AG04449 (cell line): ENCODE measurements at regions of chr3 and their contacts with region 1.

Region 1: DNA sequence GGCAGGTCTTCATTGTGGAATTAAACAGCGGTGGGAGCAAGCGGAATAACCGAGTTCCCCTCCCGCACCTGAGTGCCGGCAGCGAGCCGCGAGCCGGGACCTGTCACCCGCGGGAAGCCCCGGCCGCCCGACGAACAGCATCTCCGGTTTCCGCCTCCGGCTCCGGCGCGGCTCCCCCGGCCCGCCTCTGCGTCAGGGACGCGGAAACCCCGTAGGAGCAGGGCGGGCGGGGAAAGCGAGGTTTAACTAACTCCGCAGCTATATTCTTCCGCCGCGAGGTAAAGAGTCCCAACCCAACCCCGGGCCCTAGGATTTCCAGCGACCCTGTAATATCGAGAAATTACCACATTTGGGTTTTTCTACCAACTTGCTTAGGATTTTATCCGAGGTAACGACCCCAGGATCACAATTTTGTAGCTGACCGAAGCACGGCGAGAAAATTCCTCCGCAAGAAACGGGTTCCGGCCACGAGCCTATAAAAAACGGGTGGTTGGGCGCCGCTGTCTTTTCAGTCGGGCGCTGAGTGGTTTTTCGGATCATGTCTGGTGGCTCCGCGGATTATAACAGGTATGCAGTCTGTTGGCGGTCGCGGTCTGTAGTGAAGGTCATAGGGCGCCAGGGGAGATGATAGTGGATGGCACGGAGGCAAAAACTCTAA is at the start of gene EIF4A2:
- DNase-seq: peak; percentile 52
- H3K4me3 ChIP-seq: peak within 1 kb of the TSS; percentile 98
- CTCF ChIP-seq: no peak

Region 2: DNA sequence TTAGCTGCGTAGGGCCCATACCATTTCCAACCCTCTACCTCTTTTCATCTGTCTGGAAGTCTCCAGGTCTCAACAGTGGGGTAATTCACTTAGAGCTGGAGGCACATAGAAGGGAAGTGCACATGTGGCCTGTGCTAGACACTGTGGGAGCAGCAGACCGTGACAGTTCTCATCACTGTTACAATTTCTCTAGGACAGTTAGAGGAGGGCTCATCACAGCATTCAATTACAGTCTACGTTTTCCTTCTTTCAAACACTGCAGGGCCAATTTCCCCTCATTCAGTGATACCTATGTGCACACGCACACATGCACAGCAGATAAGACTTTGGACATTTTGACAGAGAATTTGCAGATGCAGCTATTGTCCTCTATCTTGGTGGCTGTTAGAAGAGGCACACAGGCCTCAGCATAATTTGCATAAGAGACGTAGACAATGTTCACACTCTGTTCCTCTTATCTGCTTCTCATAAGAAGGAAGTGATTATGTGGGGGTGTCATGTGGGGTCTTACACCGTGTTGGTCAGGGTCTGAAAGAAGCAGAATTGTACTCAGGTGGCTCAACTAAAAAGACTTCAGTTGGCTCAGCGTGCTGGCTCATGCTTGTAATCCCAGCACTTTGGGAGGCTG is 130.0 kb before region 1 on chr3:
- CTCF ChIA-PET with region 1: no interaction called
- POLR2A ChIA-PET with region 1: no interaction called
- DNase-seq: no peak
- H3K4me3 ChIP-seq: no peak overlapping the region
- CTCF ChIP-seq: no peak

Region 3: GRCh38 chr3:186760141-186760813 is 22.9 kb before region 1 on chr3:
- CTCF ChIA-PET with region 1: no interaction called
- POLR2A ChIA-PET with region 1: interaction called, 10 read pairs
- DNase-seq: no peak
- H3K4me3 ChIP-seq: no peak overlapping the region
- CTCF ChIP-seq: no peak

Region 4: GRCh38 chr3:186798239-186798874 is 15.2 kb after region 1 on chr3:
- CTCF ChIA-PET with region 1: no interaction called
- POLR2A ChIA-PET with region 1: interaction called, 25 read pairs
- DNase-seq: no peak
- H3K4me3 ChIP-seq: no peak overlapping the region
- CTCF ChIP-seq: no peak

Region 5: GRCh38 chr3:186821429-186822367 is 38.5 kb after region 1 on chr3:
- CTCF ChIA-PET with region 1: interaction called, 6 read pairs
- POLR2A ChIA-PET with region 1: interaction called, 20 read pairs
- DNase-seq: peak; percentile 72
- H3K4me3 ChIP-seq: peak overlapping the region; percentile 48
- CTCF ChIP-seq: peak; percentile 35